Activated naive CD4-positive, alpha-beta T cell treated with anti-CD3 and anti-CD28 coated beads, Interleukin-2, amount 10 ng/mL, durations not matched to agents 7 days and 5 days (primary cell): ENCODE measurements at regions of chr1 and their contacts with region 1.

Region 1: DNA sequence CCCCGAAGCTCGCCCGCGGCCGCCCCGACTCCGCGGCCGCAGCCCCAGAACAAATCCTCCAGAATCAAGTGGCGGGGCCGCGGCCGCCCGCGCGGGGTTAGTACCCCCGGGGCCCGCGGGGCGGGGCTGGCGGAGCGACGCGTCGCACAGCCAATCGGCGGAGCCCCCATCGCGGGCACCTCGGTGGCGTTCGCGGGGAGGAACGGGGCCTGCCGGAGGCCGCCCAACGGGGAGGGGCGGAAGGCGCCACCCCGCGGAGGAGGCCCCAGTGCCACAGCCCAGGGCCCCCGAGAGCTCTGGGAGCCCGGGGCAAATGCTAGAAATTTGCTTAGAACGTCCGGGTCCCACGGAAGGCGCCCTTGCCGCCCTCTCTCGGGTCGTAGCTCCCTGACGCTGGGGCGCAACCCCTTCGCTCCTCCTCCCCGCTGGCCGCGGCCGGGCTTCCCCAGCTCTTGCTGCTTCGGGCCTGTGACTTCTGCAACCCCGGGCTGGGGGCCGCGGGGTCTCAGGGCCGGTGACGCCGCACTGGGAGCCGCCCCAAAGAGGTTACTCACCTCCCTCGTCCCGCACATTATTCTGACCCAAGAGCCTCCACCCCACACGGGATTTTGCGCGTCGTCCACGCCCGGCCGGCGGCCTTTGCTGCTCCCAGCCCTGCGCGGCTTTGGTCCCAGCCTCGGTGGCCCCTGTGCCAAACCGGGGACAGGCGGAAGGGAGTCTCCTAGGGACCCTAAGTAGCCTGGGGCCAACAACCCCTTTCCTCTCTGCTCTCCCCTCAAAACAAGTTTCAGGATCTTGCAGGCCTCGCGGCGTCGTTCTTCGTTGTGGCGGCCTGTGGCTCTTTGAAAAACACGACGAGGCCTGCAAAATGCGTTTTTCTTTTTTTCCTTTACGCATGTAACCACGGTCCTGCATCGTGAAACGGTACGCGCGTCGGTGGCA is at the start of gene RUNX3:
- DNase-seq: peak; percentile 93
- H3K4me3 Mint-ChIP-seq: peak within 1 kb of the TSS; percentile 93
- H3K27ac Mint-ChIP-seq: peak within 1 kb of the TSS; percentile 93
- H3K4me1 Mint-ChIP-seq: peaks cover 68% of the 10 kb centered on the region
- H3K27me3 Mint-ChIP-seq: no peaks in the 10 kb centered on the region

Region 2: DNA sequence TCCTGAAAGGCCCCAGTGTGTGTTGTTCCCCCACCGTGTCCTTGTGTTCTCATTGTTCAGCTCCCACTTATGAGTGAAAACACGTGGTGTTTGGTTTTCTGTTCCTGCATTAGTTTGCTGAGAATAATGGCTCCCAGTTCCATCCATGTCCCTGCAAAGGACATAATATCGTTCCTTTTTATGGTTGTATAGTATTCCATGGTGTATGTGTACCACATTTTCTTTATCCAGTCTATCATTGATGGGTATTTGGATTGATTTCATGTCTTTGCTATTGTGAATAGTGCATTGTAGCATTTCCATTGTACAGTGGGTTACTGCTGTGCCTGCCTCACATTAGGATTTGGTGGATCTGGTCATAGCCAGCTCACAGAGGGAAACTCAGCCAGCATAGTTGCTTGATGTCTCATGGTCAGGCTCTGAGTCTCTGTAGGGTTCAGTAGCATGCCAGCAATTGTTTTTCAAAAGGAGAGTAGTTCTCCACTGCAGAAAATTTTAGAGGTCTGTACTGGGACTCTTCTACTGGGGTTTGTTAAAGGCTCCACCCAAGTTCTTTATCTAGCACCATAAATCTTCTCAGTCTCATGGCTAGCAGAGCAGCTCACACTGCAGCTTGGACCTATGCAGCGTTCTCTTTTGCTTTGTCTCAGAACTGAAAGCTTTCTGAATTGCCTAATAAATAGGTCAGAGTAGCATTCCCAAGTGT is 41.4 kb before region 1 on chr1:
- CTCF ChIA-PET with region 1: no interaction called
- DNase-seq: no peak
- H3K4me3 Mint-ChIP-seq: no peak overlapping the region
- H3K27ac Mint-ChIP-seq: no peak overlapping the region
- H3K4me1 Mint-ChIP-seq: no peaks in the 10 kb centered on the region
- H3K27me3 Mint-ChIP-seq: peaks cover 61% of the 10 kb centered on the region

Region 3: DNA sequence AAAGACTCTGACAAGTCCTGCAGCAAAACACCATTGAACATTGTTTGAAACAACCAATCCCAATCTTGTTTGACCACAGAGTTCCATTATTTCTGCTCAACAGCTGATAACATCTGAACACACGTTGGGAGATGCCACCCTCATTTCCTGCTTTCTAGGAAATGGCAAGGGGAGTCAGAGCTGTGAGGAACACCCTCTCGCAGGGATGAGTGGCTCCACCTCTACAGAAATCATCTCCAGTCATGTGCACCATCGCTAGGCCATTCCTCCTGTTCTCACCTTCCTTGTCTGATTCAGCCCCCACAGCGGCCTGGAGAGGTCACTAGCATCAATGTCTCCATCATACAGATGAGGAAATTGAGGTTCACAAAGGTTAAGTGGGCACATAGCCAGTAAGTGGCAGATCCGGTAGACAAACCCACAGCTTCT is 22.0 kb after region 1 on chr1:
- CTCF ChIA-PET with region 1: interaction called, 25 read pairs
- DNase-seq: peak; percentile 52
- H3K4me3 Mint-ChIP-seq: peak overlapping the region; percentile 42
- H3K27ac Mint-ChIP-seq: peak overlapping the region; percentile 83
- H3K4me1 Mint-ChIP-seq: peaks cover 96% of the 10 kb centered on the region
- H3K27me3 Mint-ChIP-seq: no peaks in the 10 kb centered on the region